Mammary epithelial cell (primary cell): ENCODE measurements at regions of chr9 and their contacts with region 1.

Region 1: GRCh38 chr9:5575000-5575399 is 53.9 kb upstream of the RIC1 start:
- DNase-seq: no peak
- H3K4me3 ChIP-seq: no peak overlapping the region
- H3K27ac ChIP-seq: no peak overlapping the region
- H3K4me1 ChIP-seq: peaks cover 8% of the 10 kb centered on the region
- H3K27me3 ChIP-seq: no peaks in the 10 kb centered on the region
- CTCF ChIP-seq: peak in 1 of 2 donors; percentile 16

Region 2: DNA sequence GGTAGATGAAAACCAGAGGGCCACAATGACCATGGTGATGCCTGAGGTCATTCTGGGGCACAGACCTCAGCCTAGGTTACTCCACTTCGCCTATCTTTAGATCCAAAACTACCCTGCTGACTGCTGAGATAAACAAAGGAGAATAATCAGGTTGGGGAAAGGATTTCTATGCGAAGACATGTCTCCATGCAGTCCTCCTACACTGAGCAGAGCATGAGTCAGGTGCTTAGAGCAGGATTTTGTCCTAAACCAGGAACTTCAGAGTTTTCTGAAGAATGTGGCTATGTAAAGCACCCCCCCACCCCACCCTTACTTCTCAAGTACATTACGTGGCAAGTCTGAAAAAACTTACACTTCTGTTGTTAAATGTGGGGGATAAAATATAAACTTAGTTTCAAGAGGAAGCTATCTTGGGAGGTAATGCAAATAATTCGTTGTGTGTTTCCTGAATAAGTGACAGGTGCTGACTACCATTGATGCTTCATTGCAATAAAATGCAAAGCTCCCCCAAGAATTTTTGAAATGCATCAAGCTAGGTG is 45.2 kb before region 1 on chr9:
- CTCF ChIA-PET with region 1: no interaction called
- dilution Hi-C with region 1: loop called (anchors 5 kb)
- in situ Hi-C with region 1: no loop called
- intact Hi-C with region 1: no loop called
- DNase-seq: no peak
- H3K4me3 ChIP-seq: no peak overlapping the region
- H3K27ac ChIP-seq: no peak overlapping the region
- H3K4me1 ChIP-seq: no peaks in the 10 kb centered on the region
- H3K27me3 ChIP-seq: no peaks in the 10 kb centered on the region
- CTCF ChIP-seq: no peak